Activated naive CD4-positive, alpha-beta T cell treated with anti-CD3 and anti-CD28 coated beads for 36 hours (primary cell): ENCODE measurements at regions of chr14 and their contacts with region 1.

Region 1: DNA sequence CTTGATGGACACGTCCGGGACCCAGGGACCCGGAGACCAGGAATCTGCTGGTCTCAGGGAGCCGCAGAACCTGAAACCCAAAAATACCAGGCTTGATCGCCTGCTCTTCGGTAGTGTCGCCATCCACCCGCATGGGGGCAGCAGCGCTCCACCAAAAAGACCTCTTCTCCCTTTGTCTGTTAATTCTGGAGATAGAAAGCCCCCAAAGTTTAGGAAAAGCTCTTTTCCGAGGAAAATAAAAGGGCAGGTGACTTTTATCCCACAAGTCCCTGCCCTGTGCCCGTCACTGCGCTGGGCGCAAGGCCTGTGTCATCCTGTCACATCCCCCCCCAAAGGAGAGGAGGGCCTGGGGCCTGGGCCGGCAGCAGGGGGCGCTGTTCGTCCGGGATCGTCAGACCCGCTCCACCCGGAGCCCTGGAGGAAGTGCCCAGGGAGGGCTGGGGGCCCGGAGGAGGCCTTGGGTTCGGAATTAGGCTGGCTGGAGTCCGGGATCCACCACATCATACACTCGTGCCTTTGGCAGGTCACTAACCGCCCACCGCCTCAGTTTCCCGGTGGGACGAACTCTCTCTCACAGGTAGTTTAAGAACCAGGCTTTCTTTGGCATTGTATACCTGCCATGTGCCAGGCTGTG is 31.9 kb downstream of the DAD1 start:
- DNase-seq: peak; percentile 95
- H3K4me3 Mint-ChIP-seq: peak overlapping the region; percentile 74
- H3K27ac Mint-ChIP-seq: peak overlapping the region; percentile 97
- H3K4me1 Mint-ChIP-seq: peaks cover 84% of the 10 kb centered on the region
- H3K27me3 Mint-ChIP-seq: no peaks in the 10 kb centered on the region

Region 2: DNA sequence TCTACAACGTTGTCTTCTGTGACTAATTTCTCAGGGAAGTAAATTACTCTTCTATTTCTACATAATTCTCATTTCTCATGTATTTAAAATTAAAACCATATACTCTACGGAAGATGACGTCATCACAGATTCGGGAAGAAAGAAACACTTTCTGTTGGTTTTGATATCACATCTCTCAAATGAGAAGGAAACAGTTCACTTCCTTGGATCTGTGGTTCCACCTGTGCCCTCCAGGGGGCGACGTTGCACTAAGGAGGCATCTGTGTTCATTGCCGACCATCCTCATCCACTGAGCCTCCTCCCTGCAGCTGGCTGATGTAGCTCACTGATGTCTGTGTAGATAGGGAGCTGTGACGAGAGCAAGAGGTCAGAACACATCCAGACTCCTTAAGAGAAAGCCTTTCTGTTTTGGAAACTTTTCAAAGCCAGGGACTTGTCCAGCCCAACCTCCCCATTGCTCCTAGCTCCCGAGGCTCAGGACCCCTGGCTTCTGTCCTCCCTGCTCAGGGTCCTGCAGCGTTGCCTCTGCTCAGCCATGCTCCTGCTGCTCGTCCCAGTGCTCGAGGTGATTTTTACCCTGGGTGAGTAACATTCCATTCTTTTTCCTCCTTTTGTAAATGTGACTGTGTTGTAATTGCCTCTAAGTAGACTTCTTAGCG is 710.8 kb before region 1 on chr14:
- CTCF ChIA-PET with region 1: interaction called, 4 read pairs
- intact Hi-C with region 1: loop called (anchors 1 kb)
- DNase-seq: peak; percentile 88
- H3K4me3 Mint-ChIP-seq: peak overlapping the region; percentile 88
- H3K27ac Mint-ChIP-seq: peak overlapping the region; percentile 86
- H3K4me1 Mint-ChIP-seq: peaks cover 13% of the 10 kb centered on the region
- H3K27me3 Mint-ChIP-seq: peaks cover 15% of the 10 kb centered on the region

Region 3: DNA sequence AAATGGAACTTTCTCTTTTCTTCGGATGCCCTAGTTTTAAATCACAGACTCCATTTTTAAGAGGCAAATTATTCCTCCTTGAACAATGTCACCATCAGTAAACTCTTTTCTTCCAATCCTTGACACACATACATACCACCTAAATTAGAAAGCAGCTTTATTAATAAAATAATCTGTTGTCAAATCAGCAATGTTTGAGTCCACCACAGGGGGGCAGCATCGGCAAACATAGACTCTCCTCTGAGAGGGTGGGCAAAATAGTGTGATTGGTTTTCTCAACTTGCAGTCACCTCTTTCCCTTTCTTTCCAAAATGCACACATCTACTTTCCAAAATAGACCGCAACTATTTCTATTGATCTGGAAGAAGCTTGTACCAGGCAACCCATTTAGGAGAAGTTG is 445.1 kb before region 1 on chr14:
- CTCF ChIA-PET with region 1: no interaction called
- intact Hi-C with region 1: loop called (anchors 2 kb)
- DNase-seq: peak; percentile 67
- H3K4me3 Mint-ChIP-seq: peak overlapping the region; percentile 79
- H3K27ac Mint-ChIP-seq: peak overlapping the region; percentile 87
- H3K4me1 Mint-ChIP-seq: peaks cover 22% of the 10 kb centered on the region
- H3K27me3 Mint-ChIP-seq: no peaks in the 10 kb centered on the region

Region 4: GRCh38 chr14:22466491-22466890 is 90.6 kb before region 1 on chr14:
- CTCF ChIA-PET with region 1: no interaction called
- intact Hi-C with region 1: no loop called
- DNase-seq: no peak
- H3K4me3 Mint-ChIP-seq: no peak overlapping the region
- H3K27ac Mint-ChIP-seq: peak overlapping the region; percentile 36
- H3K4me1 Mint-ChIP-seq: no peaks in the 10 kb centered on the region
- H3K27me3 Mint-ChIP-seq: no peaks in the 10 kb centered on the region

Region 5: DNA sequence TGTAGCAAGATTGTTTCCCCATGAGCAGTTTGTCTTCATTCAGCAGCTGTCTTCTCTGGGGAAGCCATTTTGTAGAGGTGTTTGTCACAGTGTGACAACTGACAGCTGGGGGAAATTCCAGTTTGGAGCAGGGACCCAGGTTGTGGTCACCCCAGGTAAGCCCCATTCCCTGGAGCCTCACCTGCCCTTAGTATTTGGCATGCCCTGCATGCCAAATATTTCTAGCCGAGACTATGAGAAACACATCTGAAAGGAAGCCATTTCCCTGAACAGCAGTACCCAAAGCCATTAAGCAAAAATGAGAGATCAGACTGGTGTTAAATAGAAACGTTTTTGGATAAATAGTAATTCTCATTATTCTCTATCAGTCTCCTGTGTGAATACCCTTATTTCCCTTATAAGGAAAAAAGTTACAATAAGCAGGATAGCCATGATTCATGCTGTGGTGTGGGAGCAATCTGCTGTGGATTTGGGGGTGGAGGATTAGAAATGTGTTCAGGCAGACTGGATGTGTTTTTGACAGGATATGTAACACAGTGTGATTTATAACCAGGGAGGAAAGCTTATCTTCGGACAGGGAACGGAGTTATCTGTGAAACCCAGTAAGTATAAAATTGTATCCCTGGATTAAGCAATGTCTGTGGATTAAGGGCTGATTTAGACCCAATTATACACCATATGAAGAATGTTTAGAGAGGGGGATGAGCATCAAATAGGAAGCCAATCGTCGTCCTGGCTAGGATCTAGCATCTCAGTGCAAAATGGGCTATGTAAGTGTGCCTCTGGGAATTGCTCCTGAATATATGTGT is 37.0 kb before region 1 on chr14:
- CTCF ChIA-PET with region 1: interaction called, 4 read pairs
- intact Hi-C with region 1: loop called (anchors 1 kb)
- DNase-seq: no peak
- H3K4me3 Mint-ChIP-seq: peak overlapping the region; percentile 91
- H3K27ac Mint-ChIP-seq: peak overlapping the region; percentile 98
- H3K4me1 Mint-ChIP-seq: peaks cover 86% of the 10 kb centered on the region
- H3K27me3 Mint-ChIP-seq: no peaks in the 10 kb centered on the region

Region 6: DNA sequence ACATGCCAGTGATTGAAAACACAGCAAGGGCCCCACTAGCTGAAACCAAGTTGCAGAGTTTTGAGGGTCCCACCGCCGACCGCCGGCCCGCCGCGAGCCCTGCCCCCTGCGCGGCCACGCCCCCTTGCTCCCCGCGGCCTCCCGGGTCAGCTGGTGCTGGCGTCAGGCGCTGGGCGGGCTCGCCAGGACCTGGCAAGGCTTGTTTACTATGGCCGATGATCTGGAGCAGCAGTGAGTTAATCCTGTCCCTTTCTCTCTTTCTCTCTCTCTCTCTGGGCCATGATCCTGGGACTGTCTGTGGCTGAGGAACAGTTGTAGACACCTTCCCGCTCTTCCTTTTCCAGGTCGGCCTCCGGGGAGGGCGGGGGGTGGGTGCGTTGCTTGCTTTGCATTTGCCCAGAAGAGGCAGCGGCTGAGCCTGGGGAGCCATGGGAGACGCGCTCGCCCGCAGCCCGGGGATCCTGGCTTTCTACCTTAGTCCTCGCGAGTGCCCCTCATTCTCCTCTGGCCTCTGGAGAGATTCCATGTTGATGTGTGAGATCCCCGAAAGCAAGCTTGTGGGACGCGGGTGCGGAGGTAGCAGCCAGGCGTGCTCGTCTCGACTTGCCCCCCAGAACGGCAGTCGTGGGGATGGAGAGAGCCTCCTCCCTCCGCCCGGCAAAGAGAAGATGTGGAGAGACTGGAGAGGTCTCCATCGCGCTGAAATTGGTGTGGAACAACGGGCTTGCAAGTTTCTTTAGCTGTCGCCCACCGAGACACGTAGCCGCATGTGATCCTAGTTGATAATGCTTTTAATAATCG is 41.2 kb after region 1 on chr14 and contains the start of gene ABHD4:
- CTCF ChIA-PET with region 1: interaction called, 12 read pairs
- intact Hi-C with region 1: no loop called
- DNase-seq: peak; percentile 75
- H3K4me3 Mint-ChIP-seq: peak within 1 kb of the TSS; percentile 90
- H3K27ac Mint-ChIP-seq: peak within 1 kb of the TSS; percentile 72
- H3K4me1 Mint-ChIP-seq: peaks cover 28% of the 10 kb centered on the region
- H3K27me3 Mint-ChIP-seq: no peaks in the 10 kb centered on the region
- total RNA-seq, gene ABHD4: 11.1 to 11.9 TPM

Region 7: GRCh38 chr14:22822571-22823098 is 265.5 kb after region 1 on chr14:
- CTCF ChIA-PET with region 1: interaction called, 3 read pairs
- intact Hi-C with region 1: loop called (anchors 1 kb)
- DNase-seq: peak; percentile 75
- H3K4me3 Mint-ChIP-seq: peak overlapping the region; percentile 61
- H3K27ac Mint-ChIP-seq: no peak overlapping the region
- H3K4me1 Mint-ChIP-seq: peaks cover 31% of the 10 kb centered on the region
- H3K27me3 Mint-ChIP-seq: peaks cover 1% of the 10 kb centered on the region